Aorta (tissue), 5 donors: ENCODE measurements at regions of chr5 and their contacts with region 1.

Region 1: GRCh38 chr5:36305571-36306326 is 4.0 kb upstream of the RANBP3L start:
- DNase-seq: peak; percentile 61 to 77
- ATAC-seq: peak; percentile 85
- H3K4me3 ChIP-seq: no peak overlapping the region
- H3K27ac ChIP-seq: no peak overlapping the region
- H3K4me1 ChIP-seq: peaks cover 0 to 2% of the 10 kb centered on the region in 2 donors
- H3K27me3 ChIP-seq: no peaks in the 10 kb centered on the region

Region 2: DNA sequence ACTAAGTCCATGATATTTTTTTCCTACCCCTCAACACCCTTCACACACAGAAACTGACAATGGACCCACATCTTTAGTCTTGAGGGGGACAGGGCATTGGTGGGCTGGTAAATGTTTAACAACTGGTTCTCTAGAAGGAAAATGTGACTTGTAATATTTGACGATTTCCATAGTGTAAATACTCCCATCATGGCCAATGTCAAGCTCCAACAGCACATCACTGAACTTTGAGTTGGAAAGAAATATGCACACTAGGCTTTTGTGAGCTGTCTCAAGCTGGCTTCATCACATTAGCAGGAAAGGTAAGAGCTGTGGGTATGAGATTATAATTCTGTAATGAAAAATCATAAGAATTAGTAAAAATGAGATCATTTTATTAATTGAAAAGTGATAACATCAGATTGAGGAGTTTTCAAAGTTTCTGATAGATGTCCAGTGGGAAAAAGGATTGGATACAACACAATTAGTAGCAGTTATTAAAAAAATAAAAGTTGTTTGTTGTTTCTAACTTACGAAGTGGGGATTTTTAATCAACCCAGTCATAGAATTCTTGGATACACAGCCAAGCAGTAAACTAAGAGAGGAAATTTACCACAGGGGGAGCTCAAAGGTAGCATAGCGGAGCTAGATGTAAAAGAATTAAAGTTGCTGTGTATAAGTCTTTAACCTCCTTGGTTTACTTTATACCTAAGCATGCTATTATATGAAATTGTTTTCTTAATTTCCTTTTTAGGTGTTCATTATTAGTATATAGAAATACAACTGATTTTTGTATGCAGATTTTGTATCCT is 885.4 kb before region 1 on chr5:
- intact Hi-C with region 1: no loop called
- DNase-seq: no peak
- ATAC-seq: no peak
- H3K4me3 ChIP-seq: no peak overlapping the region
- H3K27ac ChIP-seq: no peak overlapping the region
- H3K4me1 ChIP-seq: no peaks in the 10 kb centered on the region
- H3K27me3 ChIP-seq: no peaks in the 10 kb centered on the region

Region 3: GRCh38 chr5:36177715-36178523 is 127.8 kb before region 1 on chr5:
- intact Hi-C with region 1: loop called (anchors 2 to 5 kb)
- DNase-seq: no peak
- ATAC-seq: peak; percentile 48
- H3K4me3 ChIP-seq: no peak overlapping the region
- H3K27ac ChIP-seq: no peak overlapping the region
- H3K4me1 ChIP-seq: no peaks in the 10 kb centered on the region
- H3K27me3 ChIP-seq: no peaks in the 10 kb centered on the region

Region 4: GRCh38 chr5:36241631-36242533 is 63.9 kb before region 1 on chr5 and contains the start of gene NADK2:
- intact Hi-C with region 1: loop called in 1 of 2 experiments (anchors 10 kb)
- DNase-seq: peak; percentile 98
- ATAC-seq: peak; percentile 96
- H3K4me3 ChIP-seq: peak within 1 kb of the TSS; percentile 65 to 68
- H3K27ac ChIP-seq: peak within 1 kb of the TSS; percentile 79 to 81
- H3K4me1 ChIP-seq: peaks cover 2 to 8% of the 10 kb centered on the region in 2 donors
- H3K27me3 ChIP-seq: no peaks in the 10 kb centered on the region
- total RNA-seq, gene NADK2: 26.6 to 32.0 TPM

Region 5: GRCh38 chr5:36264202-36264760 is 41.5 kb before region 1 on chr5:
- intact Hi-C with region 1: loop called (anchors 1 to 5 kb)
- DNase-seq: no peak
- ATAC-seq: no peak
- H3K4me3 ChIP-seq: no peak overlapping the region
- H3K27ac ChIP-seq: no peak overlapping the region
- H3K4me1 ChIP-seq: no peaks in the 10 kb centered on the region
- H3K27me3 ChIP-seq: no peaks in the 10 kb centered on the region

Region 6: GRCh38 chr5:36269479-36270219 is 36.1 kb before region 1 on chr5:
- intact Hi-C with region 1: loop called (anchors 1 to 5 kb)
- DNase-seq: no peak
- ATAC-seq: no peak
- H3K4me3 ChIP-seq: no peak overlapping the region
- H3K27ac ChIP-seq: no peak overlapping the region
- H3K4me1 ChIP-seq: peaks cover 4 to 6% of the 10 kb centered on the region in 2 donors
- H3K27me3 ChIP-seq: no peaks in the 10 kb centered on the region